Heart left ventricle (tissue), 16 donors: ENCODE measurements at regions of chr7 and their contacts with region 1.

Region 1: DNA sequence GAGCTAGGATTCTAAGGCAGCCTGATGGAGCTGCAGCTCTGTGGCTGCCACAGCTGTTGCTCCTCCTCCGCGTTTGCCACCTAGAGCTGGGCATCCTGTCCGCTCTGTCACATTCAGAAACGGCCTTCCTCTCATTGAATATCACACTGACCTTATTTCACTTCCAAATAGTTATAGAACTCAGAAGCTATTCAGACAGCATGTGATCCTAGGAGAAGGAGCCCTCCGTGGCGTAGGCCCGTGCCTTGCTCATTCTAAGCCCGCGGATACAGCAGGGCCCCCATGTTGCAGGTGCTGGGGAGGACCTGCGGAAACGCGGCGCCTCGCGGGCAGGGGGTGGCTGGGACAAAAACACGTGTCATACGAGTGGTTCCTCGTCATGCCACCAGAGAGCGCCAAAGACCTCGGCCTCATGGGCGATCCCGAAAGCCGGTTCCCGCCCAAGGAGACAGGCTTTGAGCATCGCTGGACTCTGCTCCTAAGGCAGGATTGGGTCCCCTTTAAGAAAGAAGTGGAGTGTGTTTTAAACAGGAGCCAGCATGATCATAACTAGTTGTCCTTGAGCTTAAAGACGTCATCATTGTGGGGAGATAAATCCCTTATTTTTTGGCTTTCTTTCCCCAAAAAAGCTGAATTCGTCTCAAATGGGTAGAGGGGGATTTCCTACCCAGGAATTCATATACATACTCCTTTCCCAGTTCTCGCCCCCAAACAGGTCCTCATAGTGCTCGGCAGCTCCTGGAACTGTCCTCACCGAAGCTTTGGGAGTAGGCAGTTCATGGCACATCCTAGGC is 17.9 kb upstream of the FIGNL1 start:
- DNase-seq: peak; percentile 72 to 89 (median 80)
- ATAC-seq: peak; percentile 70 to 97 (median 90)
- H3K4me3 ChIP-seq: peak overlapping the region in 1 of 12 donors; percentile 12
- H3K27ac ChIP-seq: no peak overlapping the region
- H3K4me1 ChIP-seq: peaks cover 0 to 8% (median 0%) of the 10 kb centered on the region in 12 donors
- H3K27me3 ChIP-seq: peaks cover 0 to 5% (median 0%) of the 10 kb centered on the region in 9 donors
- CTCF ChIP-seq: peak; percentile 85 to 96 (median 89)
- POLR2A ChIP-seq: no peak

Region 2: DNA sequence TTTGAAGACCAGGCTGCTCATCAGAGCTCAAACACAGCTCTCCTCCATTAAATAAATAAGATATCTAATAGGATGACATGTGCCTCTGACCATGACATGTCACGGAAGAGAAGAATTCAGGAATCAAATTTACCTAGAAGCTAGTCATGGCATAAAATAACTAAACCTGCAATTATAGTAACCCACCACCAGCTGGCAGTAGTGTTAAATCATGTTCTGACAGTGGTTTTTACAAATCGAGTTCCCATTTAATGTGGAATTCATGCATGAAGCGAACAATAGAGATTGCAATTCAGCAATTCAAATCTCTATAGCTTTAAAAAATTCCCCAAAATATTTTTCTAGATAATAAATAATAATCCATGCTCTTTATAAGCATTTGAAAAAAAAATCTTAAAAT is 238.1 kb before region 1 on chr7:
- intact Hi-C with region 1: no loop called
- DNase-seq: no peak
- ATAC-seq: no peak
- H3K4me3 ChIP-seq: no peak overlapping the region
- H3K27ac ChIP-seq: no peak overlapping the region
- H3K4me1 ChIP-seq: peaks cover 0 to 27% (median 0%) of the 10 kb centered on the region in 12 donors
- H3K27me3 ChIP-seq: no peaks in the 10 kb centered on the region
- CTCF ChIP-seq: peak in 5 of 12 donors; percentile 11 to 16 (median 13)
- POLR2A ChIP-seq: no peak

Region 3: DNA sequence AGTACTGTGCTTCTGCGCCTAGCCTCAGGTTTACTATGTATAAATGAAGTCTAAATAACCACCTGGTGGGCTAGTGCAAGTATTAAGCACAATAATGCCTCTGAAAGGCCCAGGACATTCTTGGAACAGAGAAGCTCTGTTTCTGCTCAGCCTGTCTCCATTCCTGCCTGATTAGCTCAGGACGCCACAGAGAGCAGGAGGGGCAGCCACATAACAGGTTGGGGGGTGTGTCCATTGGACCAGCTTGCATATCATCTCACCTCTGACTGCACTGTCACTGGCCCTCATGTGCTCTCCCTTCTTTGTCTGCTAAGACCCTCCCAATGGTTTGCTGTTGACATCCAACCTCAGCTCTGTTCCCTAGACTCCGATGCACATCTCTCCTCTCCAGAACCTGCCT is 216.2 kb before region 1 on chr7:
- intact Hi-C with region 1: no loop called
- DNase-seq: no peak
- ATAC-seq: no peak
- H3K4me3 ChIP-seq: no peak overlapping the region
- H3K27ac ChIP-seq: no peak overlapping the region
- H3K4me1 ChIP-seq: no peaks in the 10 kb centered on the region
- H3K27me3 ChIP-seq: no peaks in the 10 kb centered on the region
- CTCF ChIP-seq: no peak
- POLR2A ChIP-seq: no peak

Region 4: GRCh38 chr7:50270531-50271018 is 197.4 kb before region 1 on chr7:
- intact Hi-C with region 1: no loop called
- DNase-seq: no peak
- ATAC-seq: no peak
- H3K4me3 ChIP-seq: no peak overlapping the region
- H3K27ac ChIP-seq: peak overlapping the region in 1 of 12 donors; percentile 27
- H3K4me1 ChIP-seq: peaks cover 0 to 59% (median 0%) of the 10 kb centered on the region in 12 donors
- H3K27me3 ChIP-seq: peaks cover 0 to 8% (median 0%) of the 10 kb centered on the region in 9 donors
- CTCF ChIP-seq: no peak
- POLR2A ChIP-seq: no peak

Region 5: DNA sequence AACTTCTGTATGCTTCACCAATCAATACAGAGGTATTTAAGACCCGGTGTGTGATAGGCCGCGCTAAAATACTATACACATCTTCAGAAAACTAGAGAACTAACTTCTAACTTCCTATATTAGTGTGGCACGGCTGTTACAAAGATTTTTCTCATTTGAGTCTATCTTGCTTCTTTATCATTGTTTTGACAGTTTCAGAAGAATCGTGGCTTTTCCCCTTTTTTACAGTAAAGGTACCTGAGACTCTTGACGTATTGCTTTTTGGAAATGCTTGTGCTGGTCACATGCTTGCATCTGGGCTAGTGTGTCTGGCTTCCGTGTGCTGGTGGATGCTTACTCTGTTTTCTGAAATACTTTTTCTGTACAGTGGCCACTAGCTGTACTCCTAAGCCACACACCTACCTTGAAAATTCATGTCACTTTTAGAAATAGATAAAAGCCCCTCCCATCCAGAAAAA is 150.8 kb before region 1 on chr7:
- intact Hi-C with region 1: no loop called
- DNase-seq: no peak
- ATAC-seq: no peak
- H3K4me3 ChIP-seq: peak overlapping the region in 1 of 12 donors; percentile 21
- H3K27ac ChIP-seq: peak overlapping the region in 1 of 12 donors; percentile 96
- H3K4me1 ChIP-seq: peaks cover 0 to 78% (median 0%) of the 10 kb centered on the region in 12 donors
- H3K27me3 ChIP-seq: peaks cover 0 to 52% (median 5%) of the 10 kb centered on the region in 9 donors
- CTCF ChIP-seq: no peak
- POLR2A ChIP-seq: no peak

Region 6: GRCh38 chr7:50595491-50596102 is 127.6 kb after region 1 on chr7:
- intact Hi-C with region 1: loop called in 4 of 10 experiments (anchors 5 to 10 kb)
- DNase-seq: no peak
- ATAC-seq: peak in 3 of 4 donors; percentile 49 to 79 (median 60)
- H3K4me3 ChIP-seq: no peak overlapping the region
- H3K27ac ChIP-seq: no peak overlapping the region
- H3K4me1 ChIP-seq: no peaks in the 10 kb centered on the region
- H3K27me3 ChIP-seq: no peaks in the 10 kb centered on the region
- CTCF ChIP-seq: peak in 8 of 12 donors; percentile 16 to 51 (median 36)
- POLR2A ChIP-seq: no peak

Region 7: DNA sequence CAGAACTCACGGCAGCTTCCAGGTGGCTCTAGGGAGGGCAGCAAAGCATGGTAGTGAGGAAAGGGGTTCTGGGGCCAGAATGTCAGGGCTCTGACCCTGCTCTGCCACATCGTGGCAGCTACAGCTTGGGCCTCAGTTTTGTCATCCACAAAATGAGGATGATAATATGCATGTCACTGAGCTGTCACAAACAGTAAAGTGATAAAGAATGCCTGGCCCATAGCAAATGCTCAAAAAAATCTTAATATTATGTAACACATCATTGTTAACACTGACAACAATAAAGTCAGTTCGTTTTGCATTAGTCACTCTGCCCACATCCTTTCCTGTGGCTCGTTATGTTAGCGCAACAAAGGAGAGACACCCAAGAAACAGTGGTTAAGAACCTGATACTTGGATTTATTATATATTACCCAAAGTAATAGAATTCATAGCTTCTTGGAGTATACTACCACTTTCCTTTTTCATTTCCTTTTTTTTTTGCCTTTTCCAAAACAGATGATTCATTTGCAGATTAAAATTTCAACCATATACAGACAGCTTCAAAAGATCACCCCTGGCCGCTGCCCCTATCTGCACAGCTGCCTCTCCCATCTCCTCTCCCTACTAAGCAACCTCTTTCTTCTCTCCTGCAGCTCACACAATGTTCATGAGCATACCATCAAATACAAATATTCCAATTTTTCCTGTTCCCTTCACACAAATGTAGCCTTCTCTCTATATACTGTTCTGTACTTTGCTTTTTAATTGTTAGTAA is 142.7 kb after region 1 on chr7:
- intact Hi-C with region 1: loop called in 1 of 10 experiments (anchors 10 kb)
- DNase-seq: no peak
- ATAC-seq: no peak
- H3K4me3 ChIP-seq: no peak overlapping the region
- H3K27ac ChIP-seq: peak overlapping the region in 1 of 12 donors; percentile 62
- H3K4me1 ChIP-seq: peaks cover 0 to 27% (median 0%) of the 10 kb centered on the region in 12 donors
- H3K27me3 ChIP-seq: no peaks in the 10 kb centered on the region
- CTCF ChIP-seq: no peak
- POLR2A ChIP-seq: no peak

Region 8: DNA sequence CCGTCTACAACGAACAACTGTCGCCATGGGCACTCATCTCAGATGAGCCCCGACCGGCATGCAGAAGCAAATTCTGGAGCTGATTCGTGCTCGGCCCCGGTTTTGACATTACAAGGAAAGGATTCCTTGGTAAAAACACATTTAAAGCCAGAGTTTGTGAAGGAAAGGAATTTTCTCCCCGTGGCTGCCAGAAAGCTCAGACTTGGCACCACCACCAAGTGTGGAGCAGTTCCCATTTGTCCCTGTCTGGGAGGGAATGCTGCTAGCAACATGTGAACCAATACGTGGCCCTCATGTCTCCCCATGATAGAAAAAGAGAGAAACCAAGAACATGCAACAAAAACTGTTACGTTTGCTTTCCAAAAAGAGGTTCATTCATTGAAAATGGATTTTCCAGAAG is 152.4 kb after region 1 on chr7:
- intact Hi-C with region 1: loop called in 2 of 10 experiments (anchors 5 to 10 kb)
- DNase-seq: no peak
- ATAC-seq: no peak
- H3K4me3 ChIP-seq: no peak overlapping the region
- H3K27ac ChIP-seq: peak overlapping the region in 3 of 12 donors; percentile 22 to 69 (median 33)
- H3K4me1 ChIP-seq: peaks cover 0 to 36% (median 19%) of the 10 kb centered on the region in 12 donors
- H3K27me3 ChIP-seq: no peaks in the 10 kb centered on the region
- CTCF ChIP-seq: no peak
- POLR2A ChIP-seq: no peak

Region 9: GRCh38 chr7:51366930-51367613 is 899.1 kb after region 1 on chr7:
- intact Hi-C with region 1: loop called in 1 of 10 experiments (anchors 10 kb)
- DNase-seq: peak in 3 of 5 donors; percentile 26 to 36 (median 36)
- ATAC-seq: peak; percentile 71 to 94 (median 85)
- H3K4me3 ChIP-seq: no peak overlapping the region
- H3K27ac ChIP-seq: no peak overlapping the region
- H3K4me1 ChIP-seq: no peaks in the 10 kb centered on the region
- H3K27me3 ChIP-seq: no peaks in the 10 kb centered on the region
- CTCF ChIP-seq: peak; percentile 36 to 77 (median 64)
- POLR2A ChIP-seq: no peak